Mammary epithelial cell (primary cell): ENCODE measurements at regions of chr5 and their contacts with region 1.

Region 1: GRCh38 chr5:38396766-38397165 is 138.4 kb downstream of the EGFLAM start:
- DNase-seq: no peak
- H3K4me3 ChIP-seq: no peak overlapping the region
- H3K27ac ChIP-seq: no peak overlapping the region
- H3K4me1 ChIP-seq: no peaks in the 10 kb centered on the region
- H3K27me3 ChIP-seq: no peaks in the 10 kb centered on the region
- CTCF ChIP-seq: no peak

Region 2: DNA sequence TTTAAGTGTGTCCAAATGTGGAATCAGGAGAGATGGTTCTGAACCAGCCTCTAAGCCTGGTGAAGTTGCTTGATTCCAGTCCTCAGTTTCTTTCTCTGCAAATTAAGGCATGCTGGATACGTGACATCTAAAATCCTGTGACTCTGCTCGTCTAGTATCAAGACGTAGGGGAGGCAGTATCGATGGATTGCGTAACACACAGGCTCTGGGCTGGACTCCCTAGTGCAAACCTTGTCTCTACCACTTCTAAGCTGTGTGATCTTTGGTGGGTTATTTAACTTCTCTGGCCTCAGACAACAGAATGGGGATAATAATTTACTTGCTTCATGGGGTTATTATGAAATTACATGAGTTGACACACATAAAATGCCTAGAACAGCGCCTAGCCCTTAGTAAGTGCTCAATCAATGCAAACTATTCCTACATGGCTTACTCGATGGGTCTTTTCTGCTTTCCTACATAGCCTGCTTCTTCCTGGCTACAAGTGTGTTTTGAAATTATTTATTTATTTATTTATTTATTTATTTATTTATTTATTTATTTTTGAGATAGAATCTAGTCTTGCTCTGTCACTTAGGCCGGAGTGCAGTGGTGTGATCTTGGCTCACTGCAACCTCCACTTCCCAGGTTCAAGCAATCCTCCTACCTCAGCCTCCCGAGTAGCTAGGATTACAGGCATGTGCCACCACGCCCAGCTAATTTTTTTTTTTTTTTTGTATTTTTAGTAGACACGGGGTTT is 36.3 kb before region 1 on chr5:
- CTCF ChIA-PET with region 1: no interaction called
- dilution Hi-C with region 1: loop called (anchors 5 kb)
- in situ Hi-C with region 1: no loop called
- intact Hi-C with region 1: no loop called
- DNase-seq: no peak
- H3K4me3 ChIP-seq: no peak overlapping the region
- H3K27ac ChIP-seq: no peak overlapping the region
- H3K4me1 ChIP-seq: no peaks in the 10 kb centered on the region
- H3K27me3 ChIP-seq: no peaks in the 10 kb centered on the region
- CTCF ChIP-seq: no peak

Region 3: GRCh38 chr5:38420691-38421390 is 24.1 kb after region 1 on chr5:
- CTCF ChIA-PET with region 1: no interaction called
- dilution Hi-C with region 1: no loop called
- in situ Hi-C with region 1: no loop called
- intact Hi-C with region 1: no loop called
- DNase-seq: peak; percentile 57
- H3K4me3 ChIP-seq: no peak overlapping the region
- H3K27ac ChIP-seq: no peak overlapping the region
- H3K4me1 ChIP-seq: no peaks in the 10 kb centered on the region
- H3K27me3 ChIP-seq: no peaks in the 10 kb centered on the region
- CTCF ChIP-seq: peak; percentile 83 to 91

Region 4: GRCh38 chr5:38453506-38453905 is 56.7 kb after region 1 on chr5:
- CTCF ChIA-PET with region 1: no interaction called
- dilution Hi-C with region 1: no loop called
- in situ Hi-C with region 1: no loop called
- intact Hi-C with region 1: no loop called
- DNase-seq: no peak
- H3K4me3 ChIP-seq: no peak overlapping the region
- H3K27ac ChIP-seq: no peak overlapping the region
- H3K4me1 ChIP-seq: peaks cover 12% of the 10 kb centered on the region
- H3K27me3 ChIP-seq: no peaks in the 10 kb centered on the region
- CTCF ChIP-seq: no peak